ENCODE measurements at regions of chr12 and their contacts with region 1.

Region 1: DNA sequence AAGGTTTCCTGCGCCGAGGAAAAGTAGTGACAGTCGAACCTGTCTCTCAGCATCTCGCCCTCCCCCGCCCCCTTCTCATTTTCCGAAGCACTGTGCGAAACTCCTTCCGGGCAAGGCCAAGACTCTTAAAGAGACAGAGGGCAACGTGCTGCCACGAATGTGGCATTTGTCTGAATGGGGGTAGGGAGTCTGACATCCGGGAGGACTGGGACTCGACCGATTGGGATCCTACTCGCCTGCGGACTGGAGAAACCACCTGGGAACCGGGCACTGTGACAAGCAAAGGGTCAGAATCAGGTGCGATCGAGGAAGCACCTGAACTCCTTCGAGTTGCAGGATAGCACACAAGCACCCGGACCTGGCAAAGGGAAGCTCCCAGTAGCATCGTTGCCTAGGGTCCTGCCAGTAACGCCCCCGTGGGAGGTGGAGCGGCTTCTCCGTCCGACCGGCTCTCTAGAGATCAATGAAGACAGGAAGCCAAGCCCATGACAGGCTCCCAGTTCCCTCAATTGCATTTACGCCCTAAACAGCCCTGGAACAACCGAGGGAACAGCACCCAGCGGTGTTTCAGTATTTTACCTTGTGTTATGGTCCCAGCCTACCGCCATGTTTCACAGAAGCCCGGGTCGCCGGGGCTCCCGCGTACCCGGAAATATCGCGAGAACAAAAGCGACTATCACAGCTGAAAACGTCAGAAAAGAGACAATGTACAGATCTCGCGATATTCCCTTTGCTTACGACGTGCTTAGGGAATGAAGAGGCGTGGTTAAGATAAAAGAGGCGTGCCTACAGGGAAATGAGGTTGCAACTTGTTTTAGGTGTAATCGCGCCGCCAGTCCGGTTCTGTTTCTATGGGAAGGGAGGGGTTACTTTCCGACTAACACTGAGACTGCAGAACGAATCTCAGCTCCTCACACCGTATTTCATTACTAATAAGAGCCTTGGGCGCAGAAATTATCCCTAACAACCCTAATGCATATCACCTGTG is at the start of gene ERGIC2:
- DNase-seq: peak; percentile 99
- H3K4me3 ChIP-seq: peak within 1 kb of the TSS; percentile 82 to 95 (median 83)
- H3K27ac ChIP-seq: peak within 1 kb of the TSS; percentile 97
- H3K4me1 ChIP-seq: no peaks in the 10 kb centered on the region
- H3K27me3 ChIP-seq: no peaks in the 10 kb centered on the region
- CTCF ChIP-seq: no peak
- total RNA-seq, gene ERGIC2: 51.7 to 81.8 TPM

Region 2: GRCh38 chr12:29427964-29428363 is 47.1 kb after region 1 on chr12:
- CTCF ChIA-PET with region 1: no interaction called
- dilution Hi-C with region 1: no loop called
- in situ Hi-C with region 1: no loop called
- intact Hi-C with region 1: loop called (anchors 1 kb)
- DNase-seq: no peak
- H3K4me3 ChIP-seq: no peak overlapping the region
- H3K27ac ChIP-seq: peak overlapping the region; percentile 10
- H3K4me1 ChIP-seq: peaks cover 23% of the 10 kb centered on the region
- H3K27me3 ChIP-seq: no peaks in the 10 kb centered on the region
- CTCF ChIP-seq: no peak

Region 3: DNA sequence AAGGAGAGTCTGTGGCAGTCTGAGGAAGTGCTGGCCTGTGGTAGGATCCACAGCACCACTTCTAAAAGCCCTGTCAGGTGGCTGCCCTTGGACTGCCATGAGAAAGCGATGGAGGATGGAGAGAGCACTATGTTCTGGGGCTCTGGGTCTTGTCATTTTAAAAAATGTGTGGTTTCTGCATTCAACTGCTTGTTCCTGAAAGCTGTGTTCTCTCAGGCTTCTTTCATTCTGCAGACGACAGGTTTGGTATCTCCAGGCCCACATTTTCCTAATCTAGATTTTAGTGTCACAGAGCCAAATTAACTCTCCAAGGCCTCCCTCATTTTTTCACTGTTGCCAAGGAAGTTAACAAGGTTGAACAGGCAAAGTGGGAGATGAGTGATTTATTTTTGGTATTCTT is 106.1 kb after region 1 on chr12:
- CTCF ChIA-PET with region 1: no interaction called
- dilution Hi-C with region 1: no loop called
- in situ Hi-C with region 1: no loop called
- intact Hi-C with region 1: loop called (anchors 5 kb)
- DNase-seq: no peak
- H3K4me3 ChIP-seq: no peak overlapping the region
- H3K27ac ChIP-seq: no peak overlapping the region
- H3K4me1 ChIP-seq: no peaks in the 10 kb centered on the region
- H3K27me3 ChIP-seq: no peaks in the 10 kb centered on the region
- CTCF ChIP-seq: no peak

Region 4: DNA sequence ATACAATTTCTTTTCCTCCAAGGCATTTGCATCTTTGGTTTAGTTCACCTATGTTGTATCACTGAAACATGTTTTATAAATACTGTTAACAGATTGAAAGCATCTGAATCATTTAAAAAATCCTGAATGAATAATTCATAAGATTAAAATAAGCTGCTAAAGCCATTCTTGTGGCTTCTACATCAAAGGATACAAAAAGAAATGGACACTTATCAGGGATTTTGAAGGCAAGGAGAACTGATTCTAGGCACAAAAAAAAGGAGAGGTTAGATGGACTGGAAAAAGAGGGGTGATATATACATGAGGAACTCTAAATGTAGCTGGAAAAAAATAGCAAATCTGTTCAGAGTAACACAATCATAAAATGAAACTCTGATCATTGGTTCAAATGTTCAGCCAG is 122.5 kb after region 1 on chr12:
- CTCF ChIA-PET with region 1: no interaction called
- dilution Hi-C with region 1: no loop called
- in situ Hi-C with region 1: no loop called
- intact Hi-C with region 1: loop called (anchors 5 kb)
- DNase-seq: no peak
- H3K4me3 ChIP-seq: no peak overlapping the region
- H3K27ac ChIP-seq: no peak overlapping the region
- H3K4me1 ChIP-seq: no peaks in the 10 kb centered on the region
- H3K27me3 ChIP-seq: no peaks in the 10 kb centered on the region
- CTCF ChIP-seq: no peak